Common myeloid progenitor, CD34-positive (primary cell): ENCODE measurements at regions of chr4 and their contacts with region 1.

Region 1: GRCh38 chr4:145898926-145899531 is 39.6 kb downstream of the ZNF827 start:
- DNase-seq: no peak
- H3K4me3 ChIP-seq: no peak overlapping the region
- H3K27ac ChIP-seq: no peak overlapping the region
- H3K4me1 ChIP-seq: peaks cover 2 to 26% (median 12%) of the 10 kb centered on the region in 4 experiments
- H3K27me3 ChIP-seq: no peaks in the 10 kb centered on the region

Region 2: GRCh38 chr4:145557720-145558119 is 341.3 kb before region 1 on chr4:
- CTCF ChIA-PET with region 1: no interaction called
- POLR2A ChIA-PET with region 1: no interaction called
- DNase-seq: peak; percentile 74 to 88 (median 84)
- H3K4me3 ChIP-seq: no peak overlapping the region
- H3K27ac ChIP-seq: no peak overlapping the region
- H3K4me1 ChIP-seq: peaks cover 0 to 4% (median 1%) of the 10 kb centered on the region in 4 experiments
- H3K27me3 ChIP-seq: no peaks in the 10 kb centered on the region

Region 3: GRCh38 chr4:145887241-145887991 is 11.6 kb before region 1 on chr4:
- CTCF ChIA-PET with region 1: interaction called, 13 read pairs
- POLR2A ChIA-PET with region 1: no interaction called
- DNase-seq: peak in 2 of 3 donors; percentile 34 to 44
- H3K4me3 ChIP-seq: no peak overlapping the region
- H3K27ac ChIP-seq: no peak overlapping the region
- H3K4me1 ChIP-seq: peaks cover 6 to 41% (median 29%) of the 10 kb centered on the region in 4 experiments
- H3K27me3 ChIP-seq: no peaks in the 10 kb centered on the region

Region 4: GRCh38 chr4:145936142-145936996 is 37.3 kb after region 1 on chr4:
- CTCF ChIA-PET with region 1: no interaction called
- POLR2A ChIA-PET with region 1: no interaction called
- DNase-seq: peak; percentile 82 to 93 (median 89)
- H3K4me3 ChIP-seq: peak overlapping the region; percentile 44 to 100 (median 82)
- H3K27ac ChIP-seq: peak overlapping the region; percentile 50 to 78
- H3K4me1 ChIP-seq: peaks cover 13 to 35% (median 27%) of the 10 kb centered on the region in 4 experiments
- H3K27me3 ChIP-seq: no peaks in the 10 kb centered on the region

Region 5: GRCh38 chr4:146105464-146105863 is 206.4 kb after region 1 on chr4:
- CTCF ChIA-PET with region 1: no interaction called
- POLR2A ChIA-PET with region 1: no interaction called
- DNase-seq: peak in 1 of 3 donors; percentile 2
- H3K4me3 ChIP-seq: no peak overlapping the region
- H3K27ac ChIP-seq: no peak overlapping the region
- H3K4me1 ChIP-seq: peaks cover 0 to 3% (median 0%) of the 10 kb centered on the region in 4 experiments
- H3K27me3 ChIP-seq: no peaks in the 10 kb centered on the region